ENCODE measurements at regions of chr1 and their contacts with region 1.

Region 1: GRCh38 chr1:27772933-27773825 is at the start of gene STX12:
- DNase-seq: peak; percentile 99 to 100 (median 100)
- ATAC-seq: peak; percentile 99
- H3K4me3 ChIP-seq: peak within 1 kb of the TSS; percentile 87
- H3K27ac ChIP-seq: peak within 1 kb of the TSS; percentile 63
- H3K4me1 ChIP-seq: peaks cover 12 to 14% of the 10 kb centered on the region in 2 experiments; a peak in 4 of 5 replicates
- H3K27me3 ChIP-seq: no peaks in the 10 kb centered on the region
- CTCF ChIP-seq: no peak
- EP300 ChIP-seq: 0 out of 2 replicates have a peak, but pooled peaks have one; percentile 3
- POLR2A ChIP-seq: peak; percentile 86
- RAD21 ChIP-seq: no peak
- polyA plus RNA-seq, gene STX12: 23.1 to 27.4 TPM

Region 2: GRCh38 chr1:27087371-27088220 is 685.6 kb before region 1 on chr1:
- CTCF ChIA-PET with region 1: no interaction called
- POLR2A ChIA-PET with region 1: no interaction called
- in situ Hi-C with region 1: no loop called
- intact Hi-C with region 1: no loop called
- DNase-seq: no peak
- ATAC-seq: no peak
- H3K4me3 ChIP-seq: no peak overlapping the region
- H3K27ac ChIP-seq: no peak overlapping the region
- H3K4me1 ChIP-seq: no peaks in the 10 kb centered on the region
- H3K27me3 ChIP-seq: peaks cover 3 to 4% of the 10 kb centered on the region in 2 experiments; a peak in 3 of 5 replicates
- CTCF ChIP-seq: no peak
- EP300 ChIP-seq: no peak
- POLR2A ChIP-seq: no peak
- RAD21 ChIP-seq: no peak

Region 3: GRCh38 chr1:27725374-27726173 is 47.6 kb before region 1 on chr1 and contains the start of gene FAM76A:
- CTCF ChIA-PET with region 1: interaction called, 5 read pairs
- POLR2A ChIA-PET with region 1: interaction called, 13 read pairs
- in situ Hi-C with region 1: no loop called
- intact Hi-C with region 1: no loop called
- DNase-seq: peak; percentile 100
- ATAC-seq: peak; percentile 98
- H3K4me3 ChIP-seq: peak within 1 kb of the TSS; percentile 86
- H3K27ac ChIP-seq: peak within 1 kb of the TSS; percentile 72
- H3K4me1 ChIP-seq: peaks cover 13 to 18% of the 10 kb centered on the region in 2 experiments; a peak in 4 of 5 replicates
- H3K27me3 ChIP-seq: no peaks in the 10 kb centered on the region
- CTCF ChIP-seq: peak; percentile 69 to 94 (median 83)
- EP300 ChIP-seq: peak; percentile 44
- POLR2A ChIP-seq: peak; percentile 42; the same call in 1 of the 2 replicates
- RAD21 ChIP-seq: peak; percentile 28 to 43; a peak in 1 of 4 replicates
- polyA plus RNA-seq, gene FAM76A: 9.5 to 14.6 TPM

Region 4: GRCh38 chr1:27760426-27760825 is 12.8 kb before region 1 on chr1:
- CTCF ChIA-PET with region 1: no interaction called
- POLR2A ChIA-PET with region 1: interaction called, 14 read pairs
- in situ Hi-C with region 1: no loop called
- intact Hi-C with region 1: no loop called
- DNase-seq: peak in 1 of 4 experiments; percentile 36
- ATAC-seq: peak; percentile 79
- H3K4me3 ChIP-seq: no peak overlapping the region
- H3K27ac ChIP-seq: no peak overlapping the region
- H3K4me1 ChIP-seq: no peaks in the 10 kb centered on the region; a peak in 2 of 5 replicates
- H3K27me3 ChIP-seq: no peaks in the 10 kb centered on the region
- CTCF ChIP-seq: peak; percentile 14 to 49 (median 22); a peak in 3 of 6 replicates
- EP300 ChIP-seq: no peak
- POLR2A ChIP-seq: no peak
- RAD21 ChIP-seq: peak in 1 of 2 experiments; percentile 51; a peak in 2 of 4 replicates

Region 5: GRCh38 chr1:27785781-27786455 is 12.7 kb after region 1 on chr1:
- CTCF ChIA-PET with region 1: no interaction called
- POLR2A ChIA-PET with region 1: interaction called, 25 read pairs
- in situ Hi-C with region 1: no loop called
- intact Hi-C with region 1: no loop called
- DNase-seq: peak in 1 of 4 experiments; percentile 37
- ATAC-seq: peak; percentile 79
- H3K4me3 ChIP-seq: no peak overlapping the region
- H3K27ac ChIP-seq: 0 out of 3 replicates have a peak overlapping the region, but pooled peaks have one; percentile 8
- H3K4me1 ChIP-seq: peaks cover 7 to 18% of the 10 kb centered on the region in 2 experiments
- H3K27me3 ChIP-seq: no peaks in the 10 kb centered on the region
- CTCF ChIP-seq: no peak
- EP300 ChIP-seq: no peak
- POLR2A ChIP-seq: no peak
- RAD21 ChIP-seq: no peak

Region 6: GRCh38 chr1:27830621-27831424 is 57.6 kb after region 1 on chr1 and contains the start of gene PPP1R8:
- CTCF ChIA-PET with region 1: interaction called, 5 read pairs
- POLR2A ChIA-PET with region 1: interaction called, 6 read pairs
- in situ Hi-C with region 1: no loop called
- intact Hi-C with region 1: loop called (anchors 5 kb)
- DNase-seq: peak; percentile 90 to 99 (median 93)
- ATAC-seq: peak; percentile 99
- H3K4me3 ChIP-seq: peak within 1 kb of the TSS; percentile 61
- H3K27ac ChIP-seq: peak within 1 kb of the TSS; percentile 82
- H3K4me1 ChIP-seq: peaks cover 7 to 14% of the 10 kb centered on the region in 2 experiments; a peak in 3 of 5 replicates
- H3K27me3 ChIP-seq: no peaks in the 10 kb centered on the region
- CTCF ChIP-seq: no peak
- EP300 ChIP-seq: no peak
- POLR2A ChIP-seq: peak; percentile 99
- RAD21 ChIP-seq: no peak
- polyA plus RNA-seq, gene PPP1R8: 16.2 to 20.2 TPM

Region 7: GRCh38 chr1:28045777-28046176 is 272.6 kb after region 1 on chr1:
- CTCF ChIA-PET with region 1: no interaction called
- POLR2A ChIA-PET with region 1: no interaction called
- in situ Hi-C with region 1: no loop called
- intact Hi-C with region 1: no loop called
- DNase-seq: no peak
- ATAC-seq: no peak
- H3K4me3 ChIP-seq: no peak overlapping the region
- H3K27ac ChIP-seq: no peak overlapping the region
- H3K4me1 ChIP-seq: peaks cover 0 to 2% of the 10 kb centered on the region in 2 experiments; a peak in 2 of 5 replicates
- H3K27me3 ChIP-seq: no peaks in the 10 kb centered on the region
- CTCF ChIP-seq: no peak
- EP300 ChIP-seq: no peak
- POLR2A ChIP-seq: no peak
- RAD21 ChIP-seq: no peak